ENCODE measurements at regions of chr12 and their contacts with region 1.

Region 1: GRCh38 chr12:9869307-9870161 is at the start of gene CLEC2B:
- DNase-seq: peak; percentile 37
- H3K4me3 Mint-ChIP-seq: peak within 1 kb of the TSS; percentile 91
- H3K27ac Mint-ChIP-seq: peak within 1 kb of the TSS; percentile 98
- H3K4me1 Mint-ChIP-seq: peaks cover 22% of the 10 kb centered on the region
- H3K27me3 Mint-ChIP-seq: no peaks in the 10 kb centered on the region
- total RNA-seq, gene CLEC2B: 30.3 to 30.7 TPM

Region 2: DNA sequence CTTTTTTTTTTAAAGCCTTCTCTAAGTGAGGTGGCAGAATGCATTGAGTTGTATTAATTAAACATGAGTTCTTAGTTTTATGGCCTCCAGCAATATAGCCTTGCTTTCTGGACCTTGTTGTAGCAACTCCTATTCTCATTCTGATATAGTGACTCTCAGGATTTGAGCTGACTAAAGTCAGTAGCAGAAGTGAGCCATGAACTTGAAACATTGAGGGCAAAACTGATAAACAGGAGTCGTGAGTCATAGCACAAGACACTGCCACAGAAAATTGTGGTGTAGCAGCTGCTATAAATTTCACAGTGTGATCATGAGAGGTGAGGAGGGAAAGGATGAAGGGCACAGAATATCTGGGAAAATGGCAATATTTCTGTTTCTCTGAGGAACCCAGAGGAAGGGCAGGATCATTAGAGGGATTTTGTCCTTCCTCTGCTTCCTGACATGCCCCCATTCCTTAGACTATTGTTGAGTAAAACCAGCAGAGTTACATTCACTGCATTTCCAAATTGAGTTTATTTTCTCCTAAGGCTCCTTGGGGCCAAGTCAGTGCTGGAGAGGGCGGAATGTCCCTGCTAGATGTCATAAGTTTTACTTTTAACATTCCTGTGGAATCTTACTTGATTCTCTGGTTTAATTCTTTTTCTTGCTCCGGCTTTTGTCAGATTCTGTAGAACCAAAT is 872.7 kb before region 1 on chr12:
- CTCF ChIA-PET with region 1: no interaction called
- intact Hi-C with region 1: loop called (anchors 5 kb)
- DNase-seq: peak; percentile 65
- H3K4me3 Mint-ChIP-seq: no peak overlapping the region
- H3K27ac Mint-ChIP-seq: peak overlapping the region; percentile 16
- H3K4me1 Mint-ChIP-seq: peaks cover 67% of the 10 kb centered on the region
- H3K27me3 Mint-ChIP-seq: no peaks in the 10 kb centered on the region

Region 3: GRCh38 chr12:9673404-9674225 is 195.9 kb before region 1 on chr12:
- CTCF ChIA-PET with region 1: interaction called, 4 read pairs
- intact Hi-C with region 1: loop called (anchors 1 kb)
- DNase-seq: peak; percentile 84
- H3K4me3 Mint-ChIP-seq: peak overlapping the region; percentile 90
- H3K27ac Mint-ChIP-seq: peak overlapping the region; percentile 97
- H3K4me1 Mint-ChIP-seq: peaks cover 35% of the 10 kb centered on the region
- H3K27me3 Mint-ChIP-seq: no peaks in the 10 kb centered on the region

Region 4: DNA sequence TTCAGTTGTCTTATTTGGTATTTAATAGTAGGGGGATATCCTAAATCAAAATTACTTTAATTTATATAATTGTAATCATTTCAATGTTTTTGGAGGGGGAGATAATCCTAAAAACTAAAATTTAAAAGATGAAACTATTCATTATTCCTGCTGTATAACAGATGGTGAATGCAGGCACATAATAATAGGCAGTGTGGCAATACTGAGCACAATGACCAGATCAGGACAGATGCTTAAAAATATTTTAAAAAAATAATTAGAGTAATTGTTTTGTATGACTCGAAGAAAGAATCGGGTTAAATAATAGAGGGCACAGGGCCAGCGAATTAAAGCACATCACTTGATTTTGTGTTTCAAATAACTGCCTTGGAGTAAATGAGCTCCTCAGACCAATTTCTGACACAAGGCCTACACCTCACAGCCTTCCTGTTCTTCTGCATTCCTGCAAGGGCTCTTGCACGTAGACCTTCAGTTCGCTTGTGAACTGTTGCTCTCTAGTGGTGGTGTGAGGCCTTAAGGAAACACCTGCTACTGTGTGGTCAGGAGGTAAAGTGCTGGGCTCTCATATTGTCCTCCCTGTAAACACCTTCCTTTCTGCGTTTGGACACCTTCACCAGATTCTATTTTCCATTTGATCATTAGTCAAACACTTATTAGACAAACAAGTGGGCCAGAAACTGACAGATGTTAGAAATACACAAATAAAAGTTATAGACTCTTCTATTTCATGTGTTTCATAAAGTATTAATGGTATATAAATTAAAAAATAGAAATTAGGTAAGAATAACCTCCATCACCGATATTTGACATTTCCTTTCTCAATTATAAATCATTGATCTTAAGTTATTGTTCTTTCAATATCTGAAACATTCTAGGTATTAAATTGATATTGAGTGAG is 71.6 kb before region 1 on chr12:
- CTCF ChIA-PET with region 1: interaction called, 7 read pairs
- intact Hi-C with region 1: loop called (anchors 1 kb)
- DNase-seq: peak; percentile 84
- H3K4me3 Mint-ChIP-seq: peak overlapping the region; percentile 0
- H3K27ac Mint-ChIP-seq: peak overlapping the region; percentile 98
- H3K4me1 Mint-ChIP-seq: peaks cover 40% of the 10 kb centered on the region
- H3K27me3 Mint-ChIP-seq: no peaks in the 10 kb centered on the region

Region 5: GRCh38 chr12:9925708-9926393 is 56.3 kb after region 1 on chr12:
- CTCF ChIA-PET with region 1: interaction called, 3 read pairs
- intact Hi-C with region 1: loop called (anchors 5 kb)
- DNase-seq: peak; percentile 9
- H3K4me3 Mint-ChIP-seq: peak overlapping the region; percentile 57
- H3K27ac Mint-ChIP-seq: peak overlapping the region; percentile 66
- H3K4me1 Mint-ChIP-seq: peaks cover 21% of the 10 kb centered on the region
- H3K27me3 Mint-ChIP-seq: peaks cover 2% of the 10 kb centered on the region

Region 6: DNA sequence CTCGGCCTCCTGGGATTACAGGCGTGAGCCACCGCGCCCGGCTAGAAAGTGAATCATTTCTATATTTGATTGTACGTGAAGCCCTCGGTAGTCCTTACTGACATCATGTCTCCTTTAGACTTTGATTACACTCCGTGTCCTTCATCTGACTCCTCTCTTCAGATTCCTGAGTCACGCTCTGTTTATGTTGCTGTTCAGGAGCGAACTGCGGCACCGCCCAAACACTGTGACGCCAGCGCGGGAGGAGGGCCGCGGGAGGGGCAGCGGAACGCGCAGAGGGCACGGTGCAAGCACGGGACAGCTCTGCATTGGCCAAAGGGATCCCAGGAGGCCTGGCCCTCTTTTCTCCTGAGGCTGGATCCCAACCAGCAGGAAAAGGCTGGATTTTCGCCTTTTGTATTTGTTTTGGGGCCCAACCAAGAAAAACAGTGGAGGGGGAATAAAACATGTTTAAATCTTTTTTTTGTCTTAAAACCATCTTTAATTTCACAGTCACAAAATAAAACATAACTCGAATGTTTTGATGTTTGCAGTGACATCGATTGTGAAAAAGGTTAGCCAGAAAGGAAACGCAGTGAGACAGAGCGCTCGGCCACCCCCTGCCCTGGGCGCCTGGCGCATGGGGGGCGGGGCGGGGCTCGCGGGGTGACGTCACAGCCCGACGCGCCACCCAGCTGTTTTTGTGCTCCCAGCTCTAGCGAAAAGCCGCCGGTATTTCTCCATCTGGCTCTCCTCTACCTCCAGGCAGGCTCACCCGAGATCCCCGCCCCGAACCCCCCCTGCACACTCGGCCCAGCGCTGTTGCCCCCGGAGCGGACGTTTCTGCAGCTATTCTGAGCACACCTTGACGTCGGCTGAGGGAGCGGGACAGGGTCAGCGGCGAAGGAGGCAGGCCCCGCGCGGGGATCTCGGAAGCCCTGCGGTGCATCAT is 342.9 kb after region 1 on chr12 and contains the start of gene GABARAPL1:
- CTCF ChIA-PET with region 1: no interaction called
- intact Hi-C with region 1: loop called (anchors 2 kb)
- DNase-seq: peak; percentile 91
- H3K4me3 Mint-ChIP-seq: peak within 1 kb of the TSS; percentile 89
- H3K27ac Mint-ChIP-seq: peak within 1 kb of the TSS; percentile 82
- H3K4me1 Mint-ChIP-seq: peaks cover 25% of the 10 kb centered on the region
- H3K27me3 Mint-ChIP-seq: no peaks in the 10 kb centered on the region
- total RNA-seq, gene GABARAPL1: 3.3 to 4.9 TPM

Region 7: DNA sequence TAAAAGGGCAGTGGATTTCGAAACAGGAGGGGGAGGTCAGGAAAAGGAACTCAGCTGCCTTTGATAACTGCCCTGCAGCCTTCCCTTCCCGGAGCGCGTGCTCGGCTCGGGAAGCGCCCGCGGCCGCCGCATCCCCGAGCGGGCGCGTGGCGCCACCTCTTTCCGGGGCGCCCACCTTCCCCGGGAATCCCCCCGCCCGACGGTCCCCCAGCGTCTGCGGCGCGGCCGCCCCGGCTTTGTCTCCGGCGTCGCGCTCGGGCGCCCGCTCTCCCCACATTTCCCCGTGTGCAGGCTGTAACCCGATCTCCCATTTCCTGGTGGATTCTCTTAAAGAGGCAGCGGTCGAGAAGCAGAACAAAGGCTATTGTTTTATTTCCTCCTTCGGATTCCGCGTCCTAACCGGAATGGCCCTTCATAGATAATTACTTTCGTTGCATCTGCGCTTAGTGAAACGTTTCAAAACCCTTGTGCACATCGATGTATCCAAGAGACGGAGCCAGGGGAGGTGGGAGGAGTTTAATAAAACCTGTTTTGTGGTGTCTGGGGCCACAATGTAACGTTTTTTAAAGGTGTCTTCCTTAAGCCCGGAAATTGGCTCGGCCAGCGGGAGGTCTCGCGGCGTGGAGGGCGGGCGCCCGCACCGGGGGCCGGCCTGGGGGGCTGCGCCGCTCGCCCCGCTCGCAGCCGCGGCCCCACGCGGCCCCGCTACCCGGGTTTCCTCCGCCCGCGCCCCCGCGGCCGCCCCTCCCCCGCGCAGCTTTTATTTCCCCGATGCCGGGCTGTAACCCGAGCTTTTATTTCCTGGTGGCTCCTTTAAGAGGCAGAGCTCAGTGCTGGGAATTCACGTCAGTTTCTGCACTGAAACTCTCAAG is 1779.5 kb after region 1 on chr12 and contains the start of gene ETV6:
- CTCF ChIA-PET with region 1: no interaction called
- intact Hi-C with region 1: loop called (anchors 10 kb)
- DNase-seq: peak; percentile 90
- H3K4me3 Mint-ChIP-seq: peak within 1 kb of the TSS; percentile 98
- H3K27ac Mint-ChIP-seq: peak within 1 kb of the TSS; percentile 99
- H3K4me1 Mint-ChIP-seq: peaks cover 27% of the 10 kb centered on the region
- H3K27me3 Mint-ChIP-seq: no peaks in the 10 kb centered on the region
- total RNA-seq, gene ETV6: 48.1 to 48.6 TPM

Measured in activated naive CD4-positive, alpha-beta T cell treated with anti-CD3 and anti-CD28 coated beads for 36 hours (primary cell).